ENCODE measurements at regions of chr3 and their contacts with region 1.

Region 1: GRCh38 chr3:111717601-111718000 is 122.5 kb upstream of the ZBED2 start:
- DNase-seq: peak; percentile 49 to 79 (median 61)
- ATAC-seq: peak; percentile 97
- H3K4me3 ChIP-seq: no peak overlapping the region
- H3K4me1 ChIP-seq: no peaks in the 10 kb centered on the region
- CTCF ChIP-seq: peak; percentile 86

Region 2: GRCh38 chr3:111285694-111286093 is 431.9 kb before region 1 on chr3:
- intact Hi-C with region 1: no loop called
- DNase-seq: no peak
- ATAC-seq: no peak
- H3K4me3 ChIP-seq: no peak overlapping the region
- H3K4me1 ChIP-seq: no peaks in the 10 kb centered on the region
- CTCF ChIP-seq: no peak

Region 3: GRCh38 chr3:111668912-111669488 is 48.6 kb before region 1 on chr3:
- intact Hi-C with region 1: loop called in 1 of 2 experiments (anchors 5 kb)
- DNase-seq: no peak
- ATAC-seq: peak; percentile 84
- H3K4me3 ChIP-seq: no peak overlapping the region
- H3K4me1 ChIP-seq: peaks cover 5% of the 10 kb centered on the region
- CTCF ChIP-seq: peak; percentile 68

Region 4: DNA sequence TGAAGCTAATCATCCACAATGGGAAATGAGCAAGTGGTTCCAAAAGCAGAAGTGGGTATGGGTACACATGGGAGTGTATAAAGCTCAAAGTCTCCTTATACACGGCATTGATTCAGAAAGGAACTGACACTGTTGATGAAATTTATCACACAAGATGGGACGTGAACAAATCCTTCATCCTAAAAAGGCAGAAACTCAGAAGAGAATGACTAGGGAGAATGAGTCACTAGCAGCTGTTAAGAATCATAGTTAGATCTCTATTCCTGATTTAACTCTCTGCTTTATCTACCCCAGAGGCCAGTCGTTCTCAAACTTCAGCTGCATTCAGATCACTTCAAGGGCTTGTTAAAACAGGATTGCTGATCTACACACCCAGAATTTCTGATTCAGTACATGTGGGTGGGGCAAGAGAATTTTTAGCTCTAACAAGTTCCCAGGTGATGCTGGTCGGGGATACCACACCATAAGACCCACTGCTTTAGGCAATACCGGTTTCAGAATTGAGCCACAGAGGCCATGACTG is 43.8 kb after region 1 on chr3:
- intact Hi-C with region 1: no loop called
- DNase-seq: no peak
- ATAC-seq: peak; percentile 38
- H3K4me3 ChIP-seq: no peak overlapping the region
- H3K4me1 ChIP-seq: no peaks in the 10 kb centered on the region
- CTCF ChIP-seq: no peak

Region 5: DNA sequence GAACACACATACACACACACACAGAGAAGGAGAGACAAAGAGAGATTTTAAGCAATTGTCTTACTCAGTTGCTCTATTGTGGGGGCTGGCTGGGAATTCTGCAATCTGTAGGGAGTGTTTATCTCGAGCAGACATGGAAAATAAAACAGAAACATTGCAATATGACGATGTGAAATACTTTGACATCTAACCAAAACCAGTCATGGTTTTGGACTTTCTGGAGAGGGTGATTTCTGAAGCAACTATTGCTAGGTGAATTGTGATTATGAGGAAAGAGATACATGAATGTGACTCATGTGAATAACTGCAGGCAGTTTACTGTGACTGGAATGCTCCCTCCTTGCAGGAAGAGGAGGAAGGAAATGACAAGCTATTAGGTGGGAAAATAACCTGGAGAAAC is 129.1 kb after region 1 on chr3:
- intact Hi-C with region 1: no loop called
- DNase-seq: no peak
- ATAC-seq: no peak
- H3K4me3 ChIP-seq: no peak overlapping the region
- H3K4me1 ChIP-seq: no peaks in the 10 kb centered on the region
- CTCF ChIP-seq: no peak

Region 6: GRCh38 chr3:111947231-111947630 is 229.6 kb after region 1 on chr3:
- intact Hi-C with region 1: no loop called
- DNase-seq: no peak
- ATAC-seq: no peak
- H3K4me3 ChIP-seq: no peak overlapping the region
- H3K4me1 ChIP-seq: no peaks in the 10 kb centered on the region
- CTCF ChIP-seq: no peak

Region 7: GRCh38 chr3:111967651-111968274 is 250.2 kb after region 1 on chr3:
- intact Hi-C with region 1: loop called (anchors 1 to 5 kb)
- DNase-seq: peak; percentile 64 to 98 (median 77)
- ATAC-seq: peak; percentile 99
- H3K4me3 ChIP-seq: no peak overlapping the region
- H3K4me1 ChIP-seq: peaks cover 3% of the 10 kb centered on the region
- CTCF ChIP-seq: peak; percentile 69

Measured in mucosa of descending colon (tissue), 3 donors.